Panc1 (cell line): ENCODE measurements at regions of chr7 and their contacts with region 1.

Region 1: GRCh38 chr7:5780801-5781496 is 514 bp downstream of the RNF216 start:
- DNase-seq: no peak
- ATAC-seq: peak; percentile 76
- H3K4me3 ChIP-seq: peak overlapping the region; percentile 56 to 76
- H3K27ac ChIP-seq: peak overlapping the region; percentile 84
- H3K4me1 ChIP-seq: peaks cover 38% of the 10 kb centered on the region
- H3K27me3 ChIP-seq: no peaks in the 10 kb centered on the region
- CTCF ChIP-seq: no peak

Region 2: GRCh38 chr7:5766321-5766761 is 14.6 kb before region 1 on chr7:
- CTCF ChIA-PET with region 1: interaction called, 6 read pairs
- POLR2A ChIA-PET with region 1: interaction called, 21 read pairs
- in situ Hi-C with region 1: no loop called
- intact Hi-C with region 1: no loop called
- DNase-seq: no peak
- ATAC-seq: peak; percentile 44
- H3K4me3 ChIP-seq: no peak overlapping the region
- H3K27ac ChIP-seq: no peak overlapping the region; the same call in 1 of the 2 replicates
- H3K4me1 ChIP-seq: peaks cover 17% of the 10 kb centered on the region
- H3K27me3 ChIP-seq: no peaks in the 10 kb centered on the region
- CTCF ChIP-seq: no peak

Region 3: DNA sequence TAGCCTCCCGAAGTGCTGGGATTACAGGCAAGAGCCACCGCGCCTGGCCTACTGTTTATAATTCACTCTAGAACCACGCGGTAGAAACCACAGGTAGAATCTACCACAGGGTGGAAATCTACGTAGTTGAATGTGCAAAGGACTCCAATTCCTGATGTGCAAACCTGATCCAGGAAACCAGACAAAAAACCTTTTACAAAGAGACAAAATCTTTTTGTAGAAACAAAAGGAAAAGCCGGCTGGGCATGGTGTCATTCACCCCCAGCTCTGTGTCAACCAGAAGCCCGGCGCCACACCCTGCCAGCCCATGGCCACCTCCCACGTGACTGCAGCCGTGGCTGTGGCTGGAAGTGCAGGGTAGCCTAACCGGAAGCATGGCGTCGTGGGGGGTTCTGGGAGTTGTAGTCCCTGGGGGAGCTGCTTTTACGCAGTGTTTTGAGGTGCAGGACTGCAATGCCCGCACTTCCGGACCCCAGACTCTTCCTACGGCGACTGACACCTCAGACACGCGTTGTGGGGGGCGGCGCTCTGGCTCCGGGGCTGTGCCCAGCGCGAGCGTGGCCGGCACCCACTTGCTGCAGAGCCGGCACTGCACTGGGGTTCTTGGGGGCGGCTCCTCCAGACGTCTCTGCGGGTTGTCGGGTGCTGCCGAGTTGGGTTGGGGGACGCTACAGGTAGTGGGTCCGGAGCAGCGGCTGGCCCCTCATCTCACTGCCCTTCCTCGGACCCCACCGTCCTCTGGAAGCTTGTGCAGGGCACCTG is 42.0 kb after region 1 on chr7:
- CTCF ChIA-PET with region 1: interaction called, 12 read pairs
- POLR2A ChIA-PET with region 1: no interaction called
- in situ Hi-C with region 1: no loop called
- intact Hi-C with region 1: no loop called
- DNase-seq: peak; percentile 90
- ATAC-seq: peak; percentile 100
- H3K4me3 ChIP-seq: peak overlapping the region; percentile 59 to 73
- H3K27ac ChIP-seq: peak overlapping the region; percentile 93
- H3K4me1 ChIP-seq: no peaks in the 10 kb centered on the region
- H3K27me3 ChIP-seq: no peaks in the 10 kb centered on the region
- CTCF ChIP-seq: no peak

Region 4: GRCh38 chr7:5838761-5839500 is 58.0 kb after region 1 on chr7:
- CTCF ChIA-PET with region 1: interaction called, 13 read pairs
- POLR2A ChIA-PET with region 1: no interaction called
- in situ Hi-C with region 1: no loop called
- intact Hi-C with region 1: no loop called
- DNase-seq: no peak
- ATAC-seq: no peak
- H3K4me3 ChIP-seq: no peak overlapping the region
- H3K27ac ChIP-seq: no peak overlapping the region
- H3K4me1 ChIP-seq: no peaks in the 10 kb centered on the region
- H3K27me3 ChIP-seq: no peaks in the 10 kb centered on the region
- CTCF ChIP-seq: no peak